B cell (primary cell): ENCODE measurements at regions of chr5 and their contacts with region 1.

Region 1: DNA sequence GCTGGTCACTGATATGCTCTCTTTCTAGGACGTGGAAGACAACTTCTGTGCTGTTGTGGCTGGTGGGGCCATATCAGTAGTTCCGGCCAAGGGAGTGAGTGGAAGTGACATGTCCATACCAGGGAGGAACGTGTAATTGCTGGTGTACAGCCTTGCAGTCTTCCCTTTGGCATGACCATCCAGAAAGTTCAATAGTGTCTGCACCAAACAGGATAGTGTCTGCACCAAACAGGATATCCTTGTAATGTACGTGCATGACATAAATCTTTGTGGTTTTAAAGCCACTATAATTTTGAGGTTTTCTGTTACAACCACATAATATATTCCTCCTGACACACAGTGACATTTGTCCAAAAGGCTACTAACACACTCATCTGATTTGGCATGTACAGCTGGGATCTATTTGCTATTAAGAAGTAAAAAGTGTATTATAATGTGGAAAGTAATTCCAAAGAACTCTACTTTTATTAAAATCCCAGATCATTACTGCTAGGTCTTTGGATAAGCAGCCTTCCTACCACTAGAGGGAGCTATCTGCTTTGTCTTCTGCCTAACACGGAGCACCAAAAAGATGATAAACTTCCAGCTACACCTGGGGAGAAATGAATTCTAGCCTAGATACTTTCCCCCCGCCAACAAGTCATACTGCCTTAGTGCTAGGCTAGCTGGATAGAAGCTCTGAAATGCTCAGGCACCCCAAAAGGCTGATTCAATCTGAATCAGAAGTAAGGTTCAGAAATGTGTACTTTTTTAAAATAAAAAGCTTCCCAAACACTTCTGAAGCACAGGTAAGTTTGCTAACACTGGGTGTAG is 52.7 kb downstream of the RNF145 start:
- DNase-seq: peak; percentile 80
- ATAC-seq: peak; percentile 53
- H3K4me3 ChIP-seq: no peak overlapping the region
- H3K4me3 Mint-ChIP-seq: peak overlapping the region; percentile 17
- H3K27ac ChIP-seq: peak overlapping the region; percentile 32 to 73
- H3K27ac Mint-ChIP-seq: peak overlapping the region; percentile 81
- H3K4me1 ChIP-seq: peaks cover 23 to 26% of the 10 kb centered on the region in 2 donors
- H3K4me1 Mint-ChIP-seq: peaks cover 28% of the 10 kb centered on the region
- H3K27me3 ChIP-seq: no peaks in the 10 kb centered on the region
- H3K27me3 Mint-ChIP-seq: no peaks in the 10 kb centered on the region
- CTCF ChIP-seq: peak; percentile 95

Region 2: GRCh38 chr5:159171274-159171673 is 14.6 kb after region 1 on chr5:
- CTCF ChIA-PET with region 1: interaction called, 42 read pairs
- POLR2A ChIA-PET with region 1: no interaction called
- intact Hi-C with region 1: no loop called
- DNase-seq: no peak
- ATAC-seq: no peak
- H3K4me3 ChIP-seq: no peak overlapping the region
- H3K4me3 Mint-ChIP-seq: no peak overlapping the region
- H3K27ac ChIP-seq: peak overlapping the region in 1 of 2 donors; percentile 21
- H3K27ac Mint-ChIP-seq: no peak overlapping the region
- H3K4me1 ChIP-seq: peaks cover 0 to 13% of the 10 kb centered on the region in 2 donors
- H3K4me1 Mint-ChIP-seq: peaks cover 14% of the 10 kb centered on the region
- H3K27me3 ChIP-seq: no peaks in the 10 kb centered on the region
- H3K27me3 Mint-ChIP-seq: no peaks in the 10 kb centered on the region
- CTCF ChIP-seq: no peak

Region 3: GRCh38 chr5:159209438-159210305 is 53.0 kb after region 1 on chr5 and contains the start of gene RNF145:
- CTCF ChIA-PET with region 1: interaction called, 22 read pairs
- POLR2A ChIA-PET with region 1: interaction called, 9 read pairs
- intact Hi-C with region 1: loop called (anchors 2 kb)
- DNase-seq: peak; percentile 98
- ATAC-seq: peak; percentile 80
- H3K4me3 ChIP-seq: peak within 1 kb of the TSS; percentile 62 to 91 (median 82)
- H3K4me3 Mint-ChIP-seq: peak within 1 kb of the TSS; percentile 98
- H3K27ac ChIP-seq: peak within 1 kb of the TSS; percentile 84 to 85
- H3K27ac Mint-ChIP-seq: peak within 1 kb of the TSS; percentile 97
- H3K4me1 ChIP-seq: peaks cover 38 to 43% of the 10 kb centered on the region in 2 donors
- H3K4me1 Mint-ChIP-seq: peaks cover 50% of the 10 kb centered on the region
- H3K27me3 ChIP-seq: no peaks in the 10 kb centered on the region
- H3K27me3 Mint-ChIP-seq: no peaks in the 10 kb centered on the region
- CTCF ChIP-seq: no peak
- total RNA-seq, gene RNF145: 56.0 and 57.2 TPM in 2 replicates

Region 4: GRCh38 chr5:159274676-159275075 is 118.0 kb after region 1 on chr5:
- CTCF ChIA-PET with region 1: interaction called, 25 read pairs
- POLR2A ChIA-PET with region 1: no interaction called
- intact Hi-C with region 1: no loop called
- DNase-seq: no peak
- ATAC-seq: no peak
- H3K4me3 ChIP-seq: no peak overlapping the region
- H3K4me3 Mint-ChIP-seq: no peak overlapping the region
- H3K27ac ChIP-seq: no peak overlapping the region
- H3K27ac Mint-ChIP-seq: no peak overlapping the region
- H3K4me1 ChIP-seq: no peaks in the 10 kb centered on the region
- H3K4me1 Mint-ChIP-seq: peaks cover 4% of the 10 kb centered on the region
- H3K27me3 ChIP-seq: no peaks in the 10 kb centered on the region
- H3K27me3 Mint-ChIP-seq: no peaks in the 10 kb centered on the region
- CTCF ChIP-seq: no peak

Region 5: DNA sequence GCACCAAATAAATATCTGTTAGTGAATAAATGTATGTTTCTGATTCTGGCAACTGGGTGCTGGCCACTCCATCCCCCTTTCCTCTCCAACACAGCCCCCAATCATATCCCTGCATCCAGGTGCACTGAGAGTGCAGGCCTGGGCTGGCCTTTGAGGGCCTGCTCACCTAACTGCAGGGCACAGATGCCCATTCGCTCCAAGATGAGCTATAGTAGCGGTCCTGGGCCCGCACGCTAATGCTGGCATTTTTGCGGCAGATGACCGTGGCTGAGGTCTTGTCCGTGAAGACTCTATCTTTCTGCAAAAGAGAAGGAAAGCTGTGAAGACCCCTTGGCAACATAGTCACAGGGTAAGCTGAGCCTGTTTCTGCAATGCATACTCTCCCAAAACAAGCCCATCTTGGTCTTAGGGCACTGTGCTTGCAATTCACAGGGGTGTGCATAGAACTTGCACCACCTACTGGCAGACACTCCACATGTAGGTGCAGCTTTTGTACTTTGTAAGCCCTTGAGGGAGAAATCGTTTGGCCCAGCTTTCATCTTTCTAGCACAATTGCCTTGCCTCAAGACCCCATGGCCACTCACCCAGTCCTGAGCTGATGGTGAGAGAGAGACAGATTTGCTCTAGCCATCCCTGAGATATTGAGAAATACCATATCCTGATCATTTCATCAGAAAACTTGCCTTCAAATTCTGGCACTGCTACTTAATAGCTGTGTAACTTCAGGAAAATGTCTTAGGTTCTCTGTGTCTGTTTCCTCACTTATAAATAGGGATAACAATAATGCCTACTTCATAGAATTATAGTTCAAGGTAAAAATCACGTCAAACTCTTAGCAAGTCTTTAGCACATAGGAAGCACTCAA is 160.1 kb after region 1 on chr5:
- CTCF ChIA-PET with region 1: interaction called, 47 read pairs
- POLR2A ChIA-PET with region 1: no interaction called
- intact Hi-C with region 1: no loop called
- DNase-seq: peak; percentile 51
- ATAC-seq: peak; percentile 62
- H3K4me3 ChIP-seq: no peak overlapping the region
- H3K4me3 Mint-ChIP-seq: no peak overlapping the region
- H3K27ac ChIP-seq: no peak overlapping the region
- H3K27ac Mint-ChIP-seq: no peak overlapping the region
- H3K4me1 ChIP-seq: peaks cover 0 to under 1% of the 10 kb centered on the region in 2 donors
- H3K4me1 Mint-ChIP-seq: no peaks in the 10 kb centered on the region
- H3K27me3 ChIP-seq: peaks cover 0 to 6% (median under 1%) of the 10 kb centered on the region in 4 experiments
- H3K27me3 Mint-ChIP-seq: peaks cover 4% of the 10 kb centered on the region
- CTCF ChIP-seq: peak; percentile 52

Region 6: DNA sequence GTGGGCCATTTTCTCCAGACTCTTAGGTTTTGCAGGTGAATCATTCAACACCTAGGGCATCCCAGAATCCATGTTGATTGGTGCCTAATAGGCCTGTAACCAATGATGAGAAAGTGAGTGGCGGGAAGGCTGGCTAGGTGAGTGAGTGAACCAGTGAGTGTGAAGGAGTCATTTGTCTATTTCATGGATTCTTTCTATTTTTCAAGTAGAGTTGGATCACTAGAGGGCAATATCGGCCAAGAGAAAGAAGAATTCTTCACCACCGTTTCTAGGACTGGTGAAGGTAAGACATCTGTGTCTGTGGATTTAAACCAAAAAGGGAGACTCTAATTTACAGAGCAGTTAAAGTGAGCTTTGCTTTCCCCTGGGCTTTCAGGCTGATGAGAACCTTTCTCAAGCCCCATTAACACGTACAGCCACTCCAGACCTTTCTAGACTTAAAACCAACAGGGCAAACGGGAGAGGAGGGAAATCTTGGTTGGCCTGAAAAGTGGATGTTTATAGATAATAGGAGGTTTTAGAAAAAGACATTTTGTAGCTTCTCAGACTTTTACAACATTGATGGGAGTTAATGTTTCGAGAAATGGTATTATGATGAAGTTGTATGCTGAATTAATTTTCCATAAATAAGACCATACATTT is 287.9 kb after region 1 on chr5:
- CTCF ChIA-PET with region 1: interaction called, 5 read pairs
- POLR2A ChIA-PET with region 1: no interaction called
- intact Hi-C with region 1: loop called (anchors 5 kb)
- DNase-seq: peak; percentile 46
- ATAC-seq: no peak
- H3K4me3 ChIP-seq: no peak overlapping the region
- H3K4me3 Mint-ChIP-seq: no peak overlapping the region
- H3K27ac ChIP-seq: no peak overlapping the region
- H3K27ac Mint-ChIP-seq: peak overlapping the region; percentile 42
- H3K4me1 ChIP-seq: peaks cover 0 to 7% of the 10 kb centered on the region in 2 donors
- H3K4me1 Mint-ChIP-seq: peaks cover 8% of the 10 kb centered on the region
- H3K27me3 ChIP-seq: no peaks in the 10 kb centered on the region
- H3K27me3 Mint-ChIP-seq: no peaks in the 10 kb centered on the region
- CTCF ChIP-seq: peak; percentile 28

Region 7: DNA sequence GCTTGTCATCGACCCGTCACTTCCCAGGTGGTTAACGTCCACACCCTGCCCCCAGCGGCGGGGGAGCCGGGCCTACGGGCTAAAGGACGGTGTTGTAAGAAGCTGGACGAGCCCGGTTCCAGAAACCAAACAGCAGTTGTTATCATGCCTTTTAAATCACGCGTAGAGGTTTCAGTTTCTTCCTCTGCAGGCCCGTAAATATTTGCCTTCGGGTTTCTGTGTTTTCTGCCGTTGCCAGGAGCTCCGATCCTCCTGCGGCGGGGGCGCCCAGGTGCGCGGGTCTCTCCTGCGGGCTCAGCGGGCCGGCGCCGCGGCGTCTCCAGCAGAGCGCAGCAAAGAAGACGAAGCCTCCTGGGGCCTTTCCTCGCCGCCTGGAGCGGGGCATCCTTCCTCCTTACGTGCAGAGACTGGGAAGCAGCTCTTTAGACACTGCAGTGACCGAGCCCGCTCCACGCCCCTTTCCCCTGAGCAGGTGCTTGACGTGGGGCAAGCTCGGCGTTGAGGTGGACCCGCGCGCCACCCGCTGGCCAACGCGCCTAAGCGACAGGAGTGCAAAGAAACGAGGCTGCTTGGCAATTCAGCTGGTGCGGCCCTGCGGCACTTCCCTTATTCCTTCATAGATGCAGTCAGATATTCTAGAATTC is 830.5 kb after region 1 on chr5:
- CTCF ChIA-PET with region 1: interaction called, 35 read pairs
- POLR2A ChIA-PET with region 1: interaction called, 4 read pairs
- intact Hi-C with region 1: loop called (anchors 1 kb)
- DNase-seq: peak; percentile 88
- ATAC-seq: peak; percentile 98
- H3K4me3 ChIP-seq: peak overlapping the region in 4 of 5 experiments; percentile 42 to 60 (median 54)
- H3K4me3 Mint-ChIP-seq: peak overlapping the region; percentile 79
- H3K27ac ChIP-seq: peak overlapping the region in 1 of 2 donors; percentile 45
- H3K27ac Mint-ChIP-seq: peak overlapping the region; percentile 51
- H3K4me1 ChIP-seq: peaks cover 6 to 7% of the 10 kb centered on the region in 2 donors
- H3K4me1 Mint-ChIP-seq: peaks cover 7% of the 10 kb centered on the region
- H3K27me3 ChIP-seq: peaks cover 0 to 4% (median 0%) of the 10 kb centered on the region in 4 experiments
- H3K27me3 Mint-ChIP-seq: peaks cover 16% of the 10 kb centered on the region
- CTCF ChIP-seq: peak; percentile 79